H1 (cell line): ENCODE measurements at regions of chr12 and their contacts with region 1.

Region 1: DNA sequence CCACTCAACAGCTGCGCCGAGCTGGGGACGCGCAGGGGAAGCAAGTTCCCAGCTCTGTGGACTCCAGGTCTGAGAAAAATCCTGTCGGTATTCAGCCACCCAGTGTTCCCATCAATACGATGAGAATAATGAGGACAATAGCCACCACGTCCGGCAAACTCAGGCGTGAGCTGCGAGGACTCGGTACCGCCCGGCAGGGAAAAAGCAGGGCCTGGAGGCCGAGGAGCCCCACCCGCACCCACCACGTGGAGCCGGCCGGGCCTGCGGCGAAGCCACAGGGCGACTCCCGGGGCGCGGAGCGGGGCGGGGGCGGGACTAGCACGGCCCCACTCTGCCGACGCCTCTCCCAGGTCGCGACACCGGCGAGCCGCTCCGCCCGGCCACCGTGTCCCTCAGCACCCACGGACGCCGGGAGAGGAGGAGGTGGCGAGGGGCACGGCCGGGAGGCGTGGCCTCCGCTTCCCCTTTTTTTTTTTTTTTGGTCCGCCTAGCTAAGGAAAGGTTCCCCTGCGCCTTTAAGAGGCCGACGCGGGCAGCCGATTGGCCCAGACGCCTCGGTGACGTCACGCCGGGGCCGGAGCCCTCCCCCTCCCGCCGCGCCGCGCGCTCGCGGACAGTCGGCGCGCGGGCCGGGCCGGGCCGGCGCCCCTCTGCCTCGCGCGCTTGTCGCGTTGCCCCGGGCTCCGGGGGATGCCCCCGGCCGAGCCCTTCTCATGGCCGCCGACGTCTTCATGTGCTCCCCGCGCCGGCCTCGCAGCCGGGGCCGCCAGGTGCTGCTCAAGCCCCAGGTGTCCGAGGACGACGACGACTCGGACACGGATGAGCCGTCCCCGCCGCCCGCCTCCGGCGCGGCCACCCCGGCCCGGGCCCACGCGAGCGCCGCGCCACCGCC is at the start of gene MLXIP:
- DNase-seq: peak; percentile 43 to 95
- H3K4me3 ChIP-seq: peak within 1 kb of the TSS; percentile 62 to 74 (median 68)
- H3K27ac ChIP-seq: no peak within 1 kb of the TSS; the same call in 1 of the 2 replicates
- H3K4me1 ChIP-seq: peaks cover 4 to 8% (median 5%) of the 10 kb centered on the region in 4 experiments; a peak in 5 of 7 replicates
- H3K27me3 ChIP-seq: peaks cover 4 to 21% (median 19%) of the 10 kb centered on the region in 4 experiments; a peak in 6 of 7 replicates
- CTCF ChIP-seq: no peak
- EP300 ChIP-seq: no peak
- POLR2A ChIP-seq: peak in 1 of 2 experiments; percentile 68; a peak in 2 of 3 replicates
- RAD21 ChIP-seq: no peak
- total RNA-seq, gene MLXIP: 40.4 and 40.5 TPM in 2 replicates

Region 2: DNA sequence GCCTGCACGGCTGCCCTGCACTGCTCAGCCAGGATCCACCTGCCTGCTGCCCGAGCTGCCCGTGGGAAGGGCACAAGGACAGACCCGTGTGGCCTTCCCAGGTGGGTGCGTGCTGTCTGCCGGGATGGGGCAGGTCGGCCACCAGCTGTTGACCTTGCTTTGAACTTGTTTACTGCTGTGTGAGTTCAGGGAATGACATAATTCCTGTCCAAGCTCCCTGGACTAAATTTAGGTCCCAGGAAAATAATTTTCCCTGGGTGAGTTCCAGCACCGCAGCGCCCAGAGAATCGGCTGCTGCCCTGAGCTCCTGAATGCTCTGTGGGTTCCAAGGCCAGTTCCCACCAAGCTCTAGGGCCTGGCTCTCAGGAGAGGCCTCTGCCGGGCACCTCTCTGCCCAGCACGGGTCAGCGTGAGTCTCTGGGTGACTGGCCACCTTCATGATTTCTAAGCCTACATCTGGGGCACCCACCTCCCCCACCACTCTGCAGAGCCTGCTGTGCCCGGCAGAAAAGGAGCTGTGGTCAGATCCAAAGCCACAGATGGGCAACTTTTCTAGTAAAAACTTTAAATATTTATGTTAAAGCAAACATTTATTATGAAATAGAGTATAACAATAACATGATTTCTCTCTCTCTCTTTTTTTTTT is 27.0 kb before region 1 on chr12:
- CTCF ChIA-PET with region 1: interaction called, 13 read pairs
- POLR2A ChIA-PET with region 1: interaction called, 7 read pairs
- DNase-seq: no peak
- H3K4me3 ChIP-seq: no peak overlapping the region
- H3K27ac ChIP-seq: no peak overlapping the region
- H3K4me1 ChIP-seq: 0 out of 7 replicates have a peak, but pooled peaks cover 0 to 2% (median 0%) of the 10 kb centered on the region in 4 experiments
- H3K27me3 ChIP-seq: no peaks in the 10 kb centered on the region
- CTCF ChIP-seq: no peak
- EP300 ChIP-seq: no peak
- POLR2A ChIP-seq: no peak
- RAD21 ChIP-seq: no peak

Region 3: GRCh38 chr12:122064025-122064777 is 14.2 kb before region 1 on chr12:
- CTCF ChIA-PET with region 1: interaction called, 9 read pairs
- POLR2A ChIA-PET with region 1: interaction called, 12 read pairs
- DNase-seq: peak; percentile 87 to 88
- H3K4me3 ChIP-seq: peak overlapping the region; percentile 2 to 44 (median 10); a peak in 4 of 8 replicates
- H3K27ac ChIP-seq: 0 out of 2 replicates have a peak overlapping the region, but pooled peaks have one; percentile 24
- H3K4me1 ChIP-seq: peaks cover 0 to 21% (median 10%) of the 10 kb centered on the region in 4 experiments; a peak in 6 of 7 replicates
- H3K27me3 ChIP-seq: no peaks in the 10 kb centered on the region
- CTCF ChIP-seq: peak; percentile 45 to 78 (median 47)
- EP300 ChIP-seq: no peak
- POLR2A ChIP-seq: peak in 1 of 2 experiments; percentile 27; a peak in 1 of 3 replicates
- RAD21 ChIP-seq: peak; percentile 25 to 40

Region 4: GRCh38 chr12:122090759-122091515 is 12.6 kb after region 1 on chr12:
- CTCF ChIA-PET with region 1: interaction called, 4 read pairs
- POLR2A ChIA-PET with region 1: interaction called, 20 read pairs
- DNase-seq: no peak
- H3K4me3 ChIP-seq: no peak overlapping the region
- H3K27ac ChIP-seq: no peak overlapping the region
- H3K4me1 ChIP-seq: peaks cover 0 to 4% (median 1%) of the 10 kb centered on the region in 4 experiments; a peak in 4 of 7 replicates
- H3K27me3 ChIP-seq: no peaks in the 10 kb centered on the region; a peak in 1 of 7 replicates
- CTCF ChIP-seq: no peak
- EP300 ChIP-seq: no peak
- POLR2A ChIP-seq: no peak
- RAD21 ChIP-seq: no peak

Region 5: DNA sequence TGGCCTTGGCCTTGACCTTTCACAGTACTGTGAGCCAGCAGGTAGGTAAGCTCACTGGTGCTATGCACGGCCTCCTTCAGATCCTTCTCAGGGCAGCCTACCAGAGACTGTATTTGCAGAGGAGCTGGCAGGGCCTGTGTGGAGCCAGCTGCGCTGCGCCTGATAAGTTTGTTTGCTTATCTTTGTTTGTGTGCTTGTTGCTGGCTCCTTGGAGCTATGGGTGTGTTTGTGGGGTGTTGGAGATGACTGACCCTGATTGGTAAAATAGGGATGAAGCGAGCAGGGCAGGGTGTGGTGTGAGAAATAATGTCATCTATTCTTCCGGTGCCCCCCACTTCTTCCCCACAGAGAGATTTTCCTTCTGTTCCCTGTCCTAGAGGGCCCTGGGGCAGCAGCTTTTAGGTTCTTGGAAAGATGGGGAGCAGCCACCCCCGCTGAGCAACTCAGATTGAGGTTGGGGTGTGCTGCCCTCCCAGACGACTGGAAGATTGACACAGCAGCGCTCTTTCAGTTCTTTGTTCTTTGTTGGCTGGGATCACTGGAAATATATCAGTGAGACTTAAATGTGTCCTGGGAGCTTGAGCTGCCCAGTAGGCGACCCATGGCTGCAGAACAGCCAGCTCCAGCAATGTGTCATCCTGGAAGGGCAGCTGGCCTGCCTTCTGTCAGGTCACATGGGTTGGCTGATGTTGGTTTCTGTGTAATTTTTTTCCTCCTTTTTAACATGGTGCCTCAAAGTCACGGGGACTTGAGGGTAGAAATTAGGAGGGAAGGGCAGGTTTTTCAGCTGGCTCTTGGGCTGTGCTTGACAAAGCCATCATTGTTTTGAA is 19.8 kb after region 1 on chr12:
- CTCF ChIA-PET with region 1: interaction called, 4 read pairs
- POLR2A ChIA-PET with region 1: interaction called, 15 read pairs
- DNase-seq: no peak
- H3K4me3 ChIP-seq: no peak overlapping the region
- H3K27ac ChIP-seq: no peak overlapping the region
- H3K4me1 ChIP-seq: peaks cover 0 to 6% (median 0%) of the 10 kb centered on the region in 4 experiments; a peak in 3 of 7 replicates
- H3K27me3 ChIP-seq: no peaks in the 10 kb centered on the region; a peak in 1 of 7 replicates
- CTCF ChIP-seq: no peak
- EP300 ChIP-seq: no peak
- POLR2A ChIP-seq: no peak
- RAD21 ChIP-seq: no peak